Activated CD4-positive, alpha-beta memory T cell treated with anti-CD3 and anti-CD28 coated beads for 36 hours (primary cell): ENCODE measurements at regions of chr17 and their contacts with region 1.

Region 1: DNA sequence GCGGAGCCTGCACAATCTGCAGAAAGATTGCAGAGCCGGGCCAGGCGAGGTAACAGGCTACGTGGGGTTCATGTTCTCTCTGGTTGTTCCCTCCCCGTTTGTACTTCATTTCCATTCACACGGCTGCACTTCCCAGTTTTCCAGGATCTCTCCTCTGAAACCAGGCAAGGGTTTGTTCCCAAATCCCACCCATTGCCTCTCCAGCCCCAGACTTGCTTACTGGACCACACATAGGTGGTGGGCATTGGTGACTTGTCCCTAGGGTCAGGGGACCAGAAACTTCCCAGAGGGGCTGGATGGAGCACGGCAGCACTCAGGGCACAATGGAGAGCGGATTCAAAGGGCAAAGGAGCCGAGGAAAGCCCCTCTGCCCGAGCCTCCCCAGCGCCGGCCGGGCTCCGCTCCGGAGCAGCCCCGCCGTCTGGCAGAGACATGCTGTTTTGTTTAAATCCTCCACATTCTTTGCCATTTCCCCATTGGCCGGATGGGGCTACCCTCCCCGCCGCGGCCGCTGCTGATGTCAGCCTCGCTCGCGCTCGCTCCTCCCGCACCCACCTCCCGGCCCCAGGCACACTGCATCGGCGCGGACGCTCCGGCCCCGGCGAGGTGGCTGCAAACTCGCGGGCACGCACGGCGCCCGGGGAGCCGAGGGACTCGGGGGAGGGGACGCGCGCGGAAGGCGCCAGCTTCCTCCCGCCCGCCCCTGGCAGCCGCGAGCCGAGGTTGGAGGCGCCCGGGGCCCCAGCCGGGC is at the start of gene PITPNC1:
- DNase-seq: peak; percentile 92
- H3K4me3 Mint-ChIP-seq: peak within 1 kb of the TSS; percentile 92
- H3K27ac Mint-ChIP-seq: peak within 1 kb of the TSS; percentile 80
- H3K4me1 Mint-ChIP-seq: peaks cover 40% of the 10 kb centered on the region
- H3K27me3 Mint-ChIP-seq: no peaks in the 10 kb centered on the region
- total RNA-seq, gene PITPNC1: 35.7 to 37.3 TPM

Region 2: DNA sequence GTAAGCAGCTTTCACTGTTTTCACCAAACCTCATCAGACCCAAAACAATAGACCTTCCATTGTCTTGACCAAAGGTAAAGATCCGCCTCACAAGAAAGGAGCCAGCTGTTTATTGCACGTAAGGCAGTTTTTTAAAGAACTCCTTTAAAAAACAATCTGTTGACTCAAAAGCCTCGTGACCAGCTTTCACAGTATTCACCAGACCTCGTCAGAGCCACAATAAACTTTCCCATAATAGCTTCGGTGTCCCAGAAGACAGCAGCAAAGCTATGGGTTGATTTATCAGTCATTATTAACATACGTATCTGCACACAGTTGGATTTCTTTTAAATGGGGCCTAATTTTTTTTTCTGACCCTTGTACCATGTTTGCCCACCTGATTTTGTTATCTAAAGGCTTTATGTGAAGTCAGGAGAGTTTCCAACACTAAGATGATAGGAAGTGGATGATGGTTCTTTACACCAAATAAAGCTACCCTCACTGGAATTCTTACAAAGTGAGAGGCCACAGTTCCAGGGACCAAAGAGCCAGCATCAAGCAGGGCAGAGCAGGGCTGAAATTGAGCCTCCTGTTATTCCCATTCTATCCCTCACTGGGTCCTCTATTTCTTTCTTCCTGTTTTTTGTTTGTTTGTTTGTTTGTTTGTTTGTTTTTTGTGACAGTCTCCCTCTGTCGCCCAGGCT is 114.3 kb before region 1 on chr17:
- CTCF ChIA-PET with region 1: no interaction called
- POLR2A ChIA-PET with region 1: no interaction called
- intact Hi-C with region 1: no loop called
- DNase-seq: no peak
- H3K4me3 Mint-ChIP-seq: no peak overlapping the region
- H3K27ac Mint-ChIP-seq: no peak overlapping the region
- H3K4me1 Mint-ChIP-seq: peaks cover 23% of the 10 kb centered on the region
- H3K27me3 Mint-ChIP-seq: no peaks in the 10 kb centered on the region

Region 3: GRCh38 chr17:67390646-67391384 is 13.9 kb after region 1 on chr17:
- CTCF ChIA-PET with region 1: interaction called, 85 read pairs
- POLR2A ChIA-PET with region 1: interaction called, 4 read pairs
- intact Hi-C with region 1: loop called (anchors 1 kb)
- DNase-seq: peak; percentile 88
- H3K4me3 Mint-ChIP-seq: peak overlapping the region; percentile 65
- H3K27ac Mint-ChIP-seq: peak overlapping the region; percentile 96
- H3K4me1 Mint-ChIP-seq: peaks cover 80% of the 10 kb centered on the region
- H3K27me3 Mint-ChIP-seq: no peaks in the 10 kb centered on the region

Region 4: DNA sequence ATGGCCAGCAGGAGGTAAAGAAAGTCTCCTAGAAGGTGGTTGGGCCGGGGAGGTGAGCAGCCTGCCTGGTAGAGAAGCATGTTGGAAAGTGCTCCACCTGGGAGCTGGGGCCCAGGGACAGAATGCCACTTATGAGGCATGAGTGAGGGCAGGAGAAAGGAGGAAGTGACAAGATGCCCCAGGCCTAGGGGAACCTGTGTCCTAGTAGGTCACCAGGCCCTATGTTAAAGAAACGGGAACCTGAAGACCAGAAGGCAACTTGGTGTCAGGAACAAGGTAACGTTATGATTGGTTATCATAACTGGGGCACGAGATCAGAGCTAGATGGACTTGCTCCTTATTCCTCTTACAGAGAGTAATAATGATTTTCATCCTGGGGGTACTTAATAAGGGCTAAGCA is 34.5 kb after region 1 on chr17:
- CTCF ChIA-PET with region 1: no interaction called
- POLR2A ChIA-PET with region 1: no interaction called
- intact Hi-C with region 1: no loop called
- DNase-seq: no peak
- H3K4me3 Mint-ChIP-seq: no peak overlapping the region
- H3K27ac Mint-ChIP-seq: peak overlapping the region; percentile 42
- H3K4me1 Mint-ChIP-seq: peaks cover 29% of the 10 kb centered on the region
- H3K27me3 Mint-ChIP-seq: no peaks in the 10 kb centered on the region

Region 5: DNA sequence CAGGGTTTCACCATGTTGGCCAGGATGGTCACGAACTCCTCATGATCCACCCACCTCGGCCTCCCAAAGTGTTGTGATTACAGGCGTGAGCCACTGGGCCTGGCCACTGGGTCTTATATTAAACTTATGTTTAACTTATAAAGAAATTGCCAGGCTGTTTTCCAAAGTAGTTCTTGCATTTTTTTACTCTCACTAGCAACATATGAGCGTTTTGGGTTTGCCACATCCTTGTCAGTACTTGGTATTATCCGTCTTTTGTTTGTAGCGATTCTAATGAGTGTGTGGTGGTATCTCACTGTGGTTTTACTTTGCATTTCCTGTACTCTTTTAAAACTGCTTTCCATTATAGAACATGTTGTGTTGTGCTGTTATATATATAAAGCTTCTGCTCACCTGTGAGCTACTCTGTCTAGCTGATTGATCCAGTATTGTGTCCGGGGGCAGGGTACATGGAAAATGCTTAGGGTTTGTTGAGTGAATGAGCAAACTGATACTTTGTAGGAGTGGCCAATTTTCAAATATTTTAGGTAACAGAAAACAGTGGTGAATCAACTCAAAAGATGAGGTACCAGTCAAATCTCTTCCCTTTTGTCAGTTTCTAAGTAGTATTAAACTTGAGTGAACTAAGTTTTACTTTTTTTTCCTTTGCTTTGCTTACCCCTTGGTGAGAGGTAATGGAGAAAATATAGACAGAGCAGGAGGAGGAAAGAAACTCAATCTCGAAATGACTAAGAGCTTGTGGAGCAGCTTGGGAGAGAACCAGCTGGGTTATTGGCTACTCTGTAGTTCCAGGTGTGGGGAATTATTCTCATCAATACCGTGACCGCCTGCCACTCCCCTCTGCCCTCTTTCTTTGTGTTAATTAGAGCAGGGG is 76.0 kb after region 1 on chr17:
- CTCF ChIA-PET with region 1: interaction called, 16 read pairs
- POLR2A ChIA-PET with region 1: interaction called, 5 read pairs
- intact Hi-C with region 1: no loop called
- DNase-seq: peak; percentile 63
- H3K4me3 Mint-ChIP-seq: peak overlapping the region; percentile 55
- H3K27ac Mint-ChIP-seq: peak overlapping the region; percentile 95
- H3K4me1 Mint-ChIP-seq: peaks cover 83% of the 10 kb centered on the region
- H3K27me3 Mint-ChIP-seq: no peaks in the 10 kb centered on the region

Region 6: GRCh38 chr17:67475236-67475937 is 98.5 kb after region 1 on chr17:
- CTCF ChIA-PET with region 1: interaction called, 284 read pairs
- POLR2A ChIA-PET with region 1: interaction called, 22 read pairs
- intact Hi-C with region 1: loop called (anchors 1 kb)
- DNase-seq: peak; percentile 92
- H3K4me3 Mint-ChIP-seq: peak overlapping the region; percentile 71
- H3K27ac Mint-ChIP-seq: peak overlapping the region; percentile 92
- H3K4me1 Mint-ChIP-seq: peaks cover 64% of the 10 kb centered on the region
- H3K27me3 Mint-ChIP-seq: no peaks in the 10 kb centered on the region

Region 7: GRCh38 chr17:67629971-67630320 is 253.0 kb after region 1 on chr17:
- CTCF ChIA-PET with region 1: interaction called, 17 read pairs
- POLR2A ChIA-PET with region 1: no interaction called
- intact Hi-C with region 1: loop called (anchors 2 kb)
- DNase-seq: no peak
- H3K4me3 Mint-ChIP-seq: no peak overlapping the region
- H3K27ac Mint-ChIP-seq: no peak overlapping the region
- H3K4me1 Mint-ChIP-seq: peaks cover 2% of the 10 kb centered on the region
- H3K27me3 Mint-ChIP-seq: no peaks in the 10 kb centered on the region

Region 8: GRCh38 chr17:67779098-67779672 is 402.3 kb after region 1 on chr17:
- CTCF ChIA-PET with region 1: interaction called, 3 read pairs
- POLR2A ChIA-PET with region 1: no interaction called
- intact Hi-C with region 1: loop called (anchors 2 kb)
- DNase-seq: peak; percentile 56
- H3K4me3 Mint-ChIP-seq: no peak overlapping the region
- H3K27ac Mint-ChIP-seq: no peak overlapping the region
- H3K4me1 Mint-ChIP-seq: no peaks in the 10 kb centered on the region
- H3K27me3 Mint-ChIP-seq: no peaks in the 10 kb centered on the region